SK-N-SH (cell line): ENCODE measurements at regions of chr1 and their contacts with region 1.

Region 1: DNA sequence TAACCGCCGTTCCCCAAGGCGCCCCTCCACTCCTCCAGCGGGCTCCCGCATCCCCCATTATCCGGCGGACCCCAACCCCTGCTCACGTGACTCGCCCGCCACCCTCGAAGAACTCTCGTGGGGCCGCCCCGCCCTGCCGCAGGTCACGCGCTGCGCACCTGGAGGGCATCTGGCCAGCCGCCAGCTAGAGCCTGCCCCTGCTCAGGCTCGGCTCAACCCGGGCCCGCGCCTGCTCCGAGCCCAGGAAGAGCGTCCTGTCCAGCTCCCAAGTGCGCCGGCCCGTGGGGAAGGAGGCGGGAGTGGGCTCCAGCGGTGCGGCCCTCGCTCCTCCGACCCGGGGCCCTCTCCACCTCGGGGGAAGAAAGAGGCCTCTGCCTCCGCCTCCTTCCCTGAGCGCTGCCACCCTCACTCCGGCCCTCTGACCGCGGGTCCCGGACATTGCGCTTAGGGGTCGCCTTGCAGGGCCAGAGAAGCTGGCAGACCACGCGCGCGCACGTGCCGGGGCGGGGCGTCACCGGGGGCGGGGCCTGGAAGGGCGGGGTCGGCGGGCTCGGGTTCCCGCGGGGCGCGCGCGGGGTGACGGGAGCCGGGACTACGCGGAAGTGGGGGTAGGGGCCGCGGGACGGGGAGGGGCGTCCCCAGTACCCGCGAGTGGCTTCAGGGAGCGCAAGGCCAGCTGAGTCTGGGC is 28.4 kb downstream of the HMGN2 start:
- DNase-seq: peak; percentile 97
- H3K4me3 ChIP-seq: peak overlapping the region; percentile 59 to 84
- H3K27ac ChIP-seq: peak overlapping the region; percentile 79 to 81
- H3K4me1 ChIP-seq: no peaks in the 10 kb centered on the region; a peak in 2 of 4 replicates
- H3K27me3 ChIP-seq: no peaks in the 10 kb centered on the region
- CTCF ChIP-seq: no peak; the same call in 1 of the 2 replicates
- EP300 ChIP-seq: no peak
- RAD21 ChIP-seq: no peak

Region 2: DNA sequence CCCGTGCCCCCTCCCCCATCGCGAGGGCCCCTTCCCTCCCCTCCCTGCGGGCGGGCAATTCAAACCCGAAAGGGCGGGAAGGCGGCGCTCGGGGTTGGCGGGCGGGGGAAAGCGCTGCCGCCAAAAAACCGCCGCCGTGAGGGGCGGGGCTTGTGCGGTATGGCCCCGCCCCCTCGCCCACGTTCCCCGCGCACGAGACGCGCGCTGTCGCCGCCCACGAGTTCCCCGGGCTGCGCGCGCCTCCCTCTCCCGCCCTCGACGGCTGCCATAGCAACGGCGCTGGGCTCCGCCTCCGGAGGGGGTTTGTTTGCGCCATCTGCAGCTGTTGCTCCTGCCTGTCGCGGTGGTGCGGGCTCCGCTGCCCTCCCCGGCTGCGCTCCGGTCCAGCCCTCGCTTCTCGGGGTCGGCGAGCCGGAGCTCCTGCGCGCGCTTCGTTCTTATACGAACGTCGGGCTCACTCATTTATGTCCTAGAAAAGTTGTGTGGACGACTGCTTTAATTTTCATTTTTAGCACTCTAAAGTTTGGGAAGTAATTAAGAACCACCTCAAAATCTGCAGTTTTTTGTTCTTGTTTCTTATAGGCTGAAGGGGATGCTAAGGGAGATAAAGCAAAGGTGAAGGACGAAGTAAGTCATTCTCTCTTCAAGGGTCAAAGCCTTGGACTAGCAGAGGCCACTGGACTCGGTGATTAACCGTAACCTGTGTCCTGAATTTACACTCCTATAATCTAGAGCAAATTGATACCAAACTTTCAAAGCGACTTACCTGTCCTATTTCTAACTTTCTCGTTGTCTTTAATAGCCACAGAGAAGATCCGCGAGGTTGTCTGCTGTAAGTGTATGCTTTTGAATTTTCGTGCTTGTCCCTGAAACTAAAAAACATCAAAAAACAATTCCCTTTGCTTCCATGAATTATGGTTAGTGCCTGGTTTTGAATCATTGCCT is 27.5 kb before region 1 on chr1:
- CTCF ChIA-PET with region 1: interaction called, 7 read pairs
- POLR2A ChIA-PET with region 1: interaction called, 14 read pairs
- DNase-seq: peak; percentile 98
- H3K4me3 ChIP-seq: peak overlapping the region; percentile 94 to 95
- H3K27ac ChIP-seq: peak overlapping the region; percentile 96 to 98
- H3K4me1 ChIP-seq: peaks cover 6 to 26% of the 10 kb centered on the region in 2 experiments; a peak in 3 of 4 replicates
- H3K27me3 ChIP-seq: no peaks in the 10 kb centered on the region
- CTCF ChIP-seq: no peak
- EP300 ChIP-seq: no peak
- RAD21 ChIP-seq: no peak

Region 3: GRCh38 chr1:26490158-26490557 is 10.5 kb before region 1 on chr1:
- CTCF ChIA-PET with region 1: interaction called, 30 read pairs
- POLR2A ChIA-PET with region 1: interaction called, 9 read pairs
- DNase-seq: no peak
- H3K4me3 ChIP-seq: no peak overlapping the region
- H3K27ac ChIP-seq: no peak overlapping the region
- H3K4me1 ChIP-seq: no peaks in the 10 kb centered on the region
- H3K27me3 ChIP-seq: no peaks in the 10 kb centered on the region
- CTCF ChIP-seq: no peak
- EP300 ChIP-seq: no peak
- RAD21 ChIP-seq: no peak

Region 4: GRCh38 chr1:26516987-26517765 is 16.5 kb after region 1 on chr1:
- CTCF ChIA-PET with region 1: interaction called, 11 read pairs
- POLR2A ChIA-PET with region 1: interaction called, 3 read pairs
- DNase-seq: no peak
- H3K4me3 ChIP-seq: no peak overlapping the region
- H3K27ac ChIP-seq: no peak overlapping the region
- H3K4me1 ChIP-seq: no peaks in the 10 kb centered on the region
- H3K27me3 ChIP-seq: no peaks in the 10 kb centered on the region; the same call in 1 of the 2 replicates
- CTCF ChIP-seq: no peak
- EP300 ChIP-seq: no peak
- RAD21 ChIP-seq: no peak

Region 5: DNA sequence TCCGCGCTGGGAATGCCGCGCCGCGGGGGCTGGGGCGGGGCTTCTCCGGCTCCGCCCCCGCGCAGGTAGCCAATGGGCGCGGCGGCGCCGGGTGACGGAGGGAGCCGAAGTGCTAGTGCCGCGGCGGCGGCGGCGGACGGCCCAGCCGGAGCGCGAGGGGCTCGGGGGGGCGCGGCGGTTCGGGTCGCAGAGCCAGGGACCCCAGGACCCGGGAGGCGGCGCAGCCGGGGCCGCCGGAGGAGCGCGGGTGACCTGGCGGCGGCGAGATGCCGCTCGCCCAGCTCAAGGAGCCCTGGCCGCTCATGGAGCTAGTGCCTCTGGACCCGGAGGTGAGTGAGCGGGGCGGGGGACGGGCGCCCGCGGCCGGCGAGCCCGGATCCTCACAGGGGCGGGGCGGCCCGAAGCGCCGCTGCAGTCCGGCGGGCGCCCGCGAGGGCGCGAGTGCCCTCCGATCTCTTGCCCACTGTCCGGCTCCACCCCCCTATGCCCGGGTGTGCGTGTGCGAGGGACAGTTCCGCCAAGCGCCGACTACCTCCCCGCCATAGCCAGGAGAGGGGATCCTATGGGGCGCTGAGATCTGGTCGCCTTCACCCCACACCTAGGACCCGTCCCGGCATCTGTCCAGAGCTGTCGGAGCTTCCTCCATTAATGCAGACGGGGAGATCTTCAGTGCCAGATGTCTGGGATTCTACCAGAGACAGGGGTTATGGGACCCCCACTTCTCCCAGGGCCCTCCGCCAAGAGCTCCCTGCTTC is 29.2 kb after region 1 on chr1 and contains the start of gene RPS6KA1:
- CTCF ChIA-PET with region 1: interaction called, 41 read pairs
- POLR2A ChIA-PET with region 1: interaction called, 10 read pairs
- DNase-seq: peak; percentile 99
- H3K4me3 ChIP-seq: peak within 1 kb of the TSS; percentile 62 to 74
- H3K27ac ChIP-seq: peak within 1 kb of the TSS in 1 of 2 experiments; percentile 40; a peak in 1 of 4 replicates
- H3K4me1 ChIP-seq: peaks cover 13 to 20% of the 10 kb centered on the region in 2 experiments; a peak in 2 of 4 replicates
- H3K27me3 ChIP-seq: peaks cover 3% of the 10 kb centered on the region; the same call in 1 of the 2 replicates
- CTCF ChIP-seq: no peak
- EP300 ChIP-seq: peak in 1 of 2 experiments; percentile 13; a peak in 1 of 4 replicates
- RAD21 ChIP-seq: no peak
- polyA plus RNA-seq, gene RPS6KA1: 8.3 and 9.7 TPM in 2 replicates

Region 6: DNA sequence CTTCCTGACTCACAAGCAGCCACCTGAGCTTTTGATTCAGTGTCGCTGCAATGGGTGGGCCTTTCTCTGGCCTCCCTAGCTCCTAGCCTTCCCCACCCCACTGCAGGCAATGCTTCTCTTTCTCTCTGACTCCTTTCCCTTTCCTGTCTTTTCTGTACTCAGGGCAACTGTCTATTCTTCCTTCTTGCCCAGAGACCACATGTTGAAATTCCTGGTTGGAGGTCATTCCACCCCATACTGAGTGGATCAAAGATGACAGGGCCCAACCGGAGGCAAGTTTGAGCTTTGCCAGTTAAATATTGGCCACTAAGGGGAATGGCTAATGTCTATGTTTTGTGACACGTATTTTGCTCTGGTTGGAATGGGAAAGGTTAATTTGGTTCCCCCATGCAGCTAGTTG is 130.0 kb after region 1 on chr1:
- CTCF ChIA-PET with region 1: no interaction called
- POLR2A ChIA-PET with region 1: no interaction called
- DNase-seq: no peak
- H3K4me3 ChIP-seq: no peak overlapping the region
- H3K27ac ChIP-seq: no peak overlapping the region
- H3K4me1 ChIP-seq: no peaks in the 10 kb centered on the region
- H3K27me3 ChIP-seq: no peaks in the 10 kb centered on the region
- CTCF ChIP-seq: no peak
- EP300 ChIP-seq: no peak
- RAD21 ChIP-seq: no peak

Region 7: DNA sequence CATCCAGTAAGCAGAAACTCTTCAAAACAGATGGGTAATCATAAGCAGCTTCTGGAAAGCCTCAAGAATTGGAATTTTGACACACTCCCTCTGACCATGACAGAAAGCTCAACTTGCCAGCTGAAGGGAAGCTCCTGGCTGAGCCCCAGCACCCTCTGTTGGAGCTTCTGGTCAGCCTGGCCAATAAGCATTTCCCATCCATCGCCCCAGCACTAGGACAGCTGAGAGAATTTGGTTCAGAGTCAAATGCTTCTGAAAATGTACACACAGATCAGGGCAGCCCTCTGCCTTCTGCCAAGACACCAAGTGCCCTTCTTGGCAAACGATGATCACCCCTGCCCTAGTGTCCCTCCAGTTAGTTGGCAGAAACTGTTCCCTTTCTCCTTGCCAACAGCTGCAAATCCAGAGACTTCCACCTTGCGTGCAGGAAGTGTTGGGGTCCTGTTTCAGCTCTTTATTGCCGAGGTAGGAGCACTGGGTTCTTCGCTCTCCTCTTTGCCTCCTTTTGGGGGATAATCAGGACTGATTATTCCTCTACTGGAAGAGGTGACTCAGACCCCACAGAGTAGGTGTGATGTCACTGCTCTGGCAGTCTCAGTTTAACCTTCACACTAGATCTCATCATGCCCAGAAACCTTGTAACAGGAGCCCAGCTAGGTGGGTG is 299.0 kb after region 1 on chr1:
- CTCF ChIA-PET with region 1: interaction called, 15 read pairs
- POLR2A ChIA-PET with region 1: no interaction called
- DNase-seq: peak; percentile 32
- H3K4me3 ChIP-seq: peak overlapping the region; percentile 4 to 9; a peak in 1 of 4 replicates
- H3K27ac ChIP-seq: peak overlapping the region; percentile 29 to 68
- H3K4me1 ChIP-seq: peaks cover 11 to 13% of the 10 kb centered on the region in 2 experiments
- H3K27me3 ChIP-seq: no peaks in the 10 kb centered on the region
- CTCF ChIP-seq: no peak
- EP300 ChIP-seq: peak in 1 of 2 experiments; percentile 42; a peak in 1 of 4 replicates
- RAD21 ChIP-seq: no peak